Sciatic nerve (tissue), 2 donors: ENCODE measurements at regions of chr12 and their contacts with region 1.

Region 1: DNA sequence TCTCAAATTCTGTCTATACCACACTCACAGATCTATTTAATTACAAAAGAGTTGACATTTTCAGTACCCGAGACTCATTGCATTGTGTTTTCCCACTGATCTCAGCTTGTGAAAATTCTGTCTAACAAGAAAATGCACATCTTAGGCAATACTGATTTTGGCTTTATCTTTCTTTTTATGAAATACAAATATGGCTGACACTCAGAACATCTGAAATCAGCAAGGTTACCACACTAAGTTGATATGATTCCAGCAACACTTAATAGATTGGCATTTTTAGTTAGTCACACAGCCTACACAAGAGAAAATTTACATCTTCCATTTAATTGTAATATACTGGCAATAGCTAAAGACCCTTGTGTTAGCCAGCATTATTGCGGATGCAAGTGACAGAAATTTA is 40.3 kb downstream of the PEX5 start:
- DNase-seq: no peak
- ATAC-seq: no peak

Region 2: DNA sequence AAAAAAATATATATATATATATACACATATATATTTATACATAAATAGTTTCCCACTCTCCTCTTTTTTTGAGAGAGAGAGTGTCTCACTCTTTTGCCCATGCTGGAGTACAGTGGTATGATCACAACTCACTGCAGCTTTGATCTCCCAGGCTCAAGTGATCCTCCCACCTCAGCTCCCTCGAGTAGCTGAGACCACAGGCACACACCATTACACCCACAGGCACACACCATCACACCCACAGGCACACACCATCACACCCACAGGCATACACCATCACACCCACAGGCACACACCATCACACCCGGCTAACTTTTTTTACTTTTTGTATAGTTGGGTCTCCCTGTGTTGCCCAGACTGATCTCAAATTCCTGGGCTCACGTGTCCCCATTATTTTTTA is 709.6 kb before region 1 on chr12:
- intact Hi-C with region 1: no loop called
- DNase-seq: no peak
- ATAC-seq: no peak

Region 3: GRCh38 chr12:7241404-7242005 is 11.8 kb after region 1 on chr12:
- intact Hi-C with region 1: no loop called
- DNase-seq: no peak
- ATAC-seq: no peak

Region 4: GRCh38 chr12:8936735-8937134 is 1707.0 kb after region 1 on chr12:
- intact Hi-C with region 1: loop called (anchors 5 kb)
- DNase-seq: no peak
- ATAC-seq: no peak